ENCODE measurements at regions of chr17 and their contacts with region 1.

Region 1: GRCh38 chr17:46152423-46152822 is 40.8 kb downstream of the KANSL1 start:
- DNase-seq: no peak
- ATAC-seq: no peak
- H3K4me3 ChIP-seq: no peak overlapping the region
- H3K27ac ChIP-seq: no peak overlapping the region
- H3K4me1 ChIP-seq: peaks cover 0 to 1% of the 10 kb centered on the region in 2 experiments; a peak in 1 of 4 replicates
- H3K27me3 ChIP-seq: no peaks in the 10 kb centered on the region
- CTCF ChIP-seq: no peak
- POLR2A ChIP-seq: no peak
- RAD21 ChIP-seq: no peak

Region 2: DNA sequence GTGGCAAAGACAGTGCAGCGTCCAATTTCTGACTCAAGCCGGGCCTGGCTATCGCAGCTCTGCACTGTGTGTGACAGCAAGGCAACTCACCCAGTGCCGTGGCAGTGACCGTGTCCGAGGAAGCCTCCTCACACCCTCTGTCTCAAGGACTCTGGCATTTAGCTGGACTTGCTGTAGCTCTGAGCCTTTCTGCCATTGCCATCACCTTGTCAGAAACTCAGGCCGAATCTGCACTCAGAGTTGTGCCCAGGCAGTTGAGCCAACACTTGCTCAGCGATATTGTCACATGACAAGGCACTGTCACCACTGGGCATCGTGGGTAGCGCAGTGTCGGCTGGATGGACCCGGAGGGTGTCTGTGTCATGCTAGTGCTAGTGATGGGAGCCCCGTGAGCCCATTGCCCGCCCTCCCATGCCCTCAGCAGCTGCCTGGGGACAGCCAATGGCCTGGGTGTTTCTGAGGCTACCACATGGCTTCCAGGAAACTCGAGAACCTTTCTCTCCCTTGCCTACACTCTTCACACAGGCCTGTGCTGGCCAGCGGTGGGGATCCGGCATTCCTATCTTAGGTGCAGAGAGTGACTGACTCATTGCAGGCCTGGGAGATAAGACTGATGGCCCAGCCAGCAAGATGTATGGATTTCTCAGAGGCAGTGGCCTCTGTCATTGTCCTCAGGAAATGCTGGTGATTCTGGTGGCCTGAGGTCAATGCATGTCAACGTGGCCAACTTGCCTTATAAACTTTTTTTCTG is 175.5 kb before region 1 on chr17:
- CTCF ChIA-PET with region 1: no interaction called
- POLR2A ChIA-PET with region 1: no interaction called
- RAD21 ChIA-PET with region 1: no interaction called
- intact Hi-C with region 1: no loop called
- DNase-seq: no peak
- ATAC-seq: peak; percentile 29
- H3K4me3 ChIP-seq: no peak overlapping the region
- H3K27ac ChIP-seq: no peak overlapping the region
- H3K4me1 ChIP-seq: no peaks in the 10 kb centered on the region
- H3K27me3 ChIP-seq: no peaks in the 10 kb centered on the region
- CTCF ChIP-seq: no peak
- POLR2A ChIP-seq: no peak
- RAD21 ChIP-seq: no peak

Region 3: DNA sequence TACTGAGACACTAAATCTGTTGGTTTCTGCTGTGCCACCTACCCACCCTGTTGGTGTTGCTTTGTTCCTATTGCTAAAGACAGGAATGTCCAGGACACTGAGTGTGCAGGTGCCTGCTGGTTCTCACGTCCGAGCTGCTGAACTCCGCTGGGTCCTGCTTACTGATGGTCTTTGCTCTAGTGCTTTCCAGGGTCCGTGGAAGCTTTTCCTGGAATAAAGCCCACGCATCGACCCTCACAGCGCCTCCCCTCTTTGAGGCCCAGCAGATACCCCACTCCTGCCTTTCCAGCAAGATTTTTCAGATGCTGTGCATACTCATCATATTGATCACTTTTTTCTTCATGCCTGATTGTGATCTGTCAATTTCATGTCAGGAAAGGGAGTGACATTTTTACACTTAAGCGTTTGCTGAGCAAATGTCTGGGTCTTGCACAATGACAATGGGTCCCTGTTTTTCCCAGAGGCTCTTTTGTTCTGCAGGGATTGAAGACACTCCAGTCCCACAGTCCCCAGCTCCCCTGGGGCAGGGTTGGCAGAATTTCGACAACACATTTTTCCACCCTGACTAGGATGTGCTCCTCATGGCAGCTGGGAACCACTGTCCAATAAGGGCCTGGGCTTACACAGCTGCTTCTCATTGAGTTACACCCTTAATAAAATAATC is 138.8 kb before region 1 on chr17:
- CTCF ChIA-PET with region 1: no interaction called
- POLR2A ChIA-PET with region 1: no interaction called
- RAD21 ChIA-PET with region 1: no interaction called
- intact Hi-C with region 1: no loop called
- DNase-seq: no peak
- ATAC-seq: no peak
- H3K4me3 ChIP-seq: no peak overlapping the region
- H3K27ac ChIP-seq: no peak overlapping the region
- H3K4me1 ChIP-seq: no peaks in the 10 kb centered on the region
- H3K27me3 ChIP-seq: no peaks in the 10 kb centered on the region
- CTCF ChIP-seq: no peak
- POLR2A ChIP-seq: no peak
- RAD21 ChIP-seq: no peak

Region 4: GRCh38 chr17:46121841-46122485 is 30.5 kb before region 1 on chr17:
- CTCF ChIA-PET with region 1: no interaction called
- POLR2A ChIA-PET with region 1: no interaction called
- RAD21 ChIA-PET with region 1: no interaction called
- intact Hi-C with region 1: no loop called
- DNase-seq: no peak
- ATAC-seq: no peak
- H3K4me3 ChIP-seq: no peak overlapping the region
- H3K27ac ChIP-seq: no peak overlapping the region
- H3K4me1 ChIP-seq: no peaks in the 10 kb centered on the region
- H3K27me3 ChIP-seq: no peaks in the 10 kb centered on the region
- CTCF ChIP-seq: no peak
- POLR2A ChIP-seq: no peak
- RAD21 ChIP-seq: no peak

Region 5: DNA sequence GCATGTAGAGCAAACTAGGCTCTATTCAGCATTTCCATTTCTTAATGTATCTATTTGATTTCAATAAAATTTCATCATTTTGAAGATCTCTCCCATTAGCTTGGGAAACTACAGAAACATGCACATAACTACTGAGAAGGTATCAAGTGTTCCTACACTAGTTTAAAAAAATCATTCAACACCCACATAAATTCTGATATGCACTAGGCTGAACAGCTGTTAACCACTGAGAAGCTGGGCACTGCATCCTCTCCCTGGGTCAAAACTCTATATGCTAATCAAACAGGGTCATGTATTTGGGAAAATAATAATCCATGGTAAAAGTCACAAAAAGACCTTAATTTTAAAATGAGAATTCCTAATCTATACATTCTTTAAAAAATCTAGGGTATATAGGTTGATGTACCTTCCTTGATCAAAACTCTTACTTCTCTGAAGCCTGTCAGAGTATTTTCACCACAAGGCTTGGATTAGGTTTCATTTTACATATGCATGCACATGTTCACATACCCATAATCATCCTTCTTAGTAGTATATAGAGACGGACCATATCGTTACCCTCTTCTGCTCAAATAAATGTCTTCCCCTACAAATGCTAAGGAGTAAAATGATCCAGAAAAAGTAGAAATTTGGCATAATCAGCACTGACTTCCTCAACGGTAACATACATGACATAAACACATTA is 16.4 kb before region 1 on chr17:
- CTCF ChIA-PET with region 1: no interaction called
- POLR2A ChIA-PET with region 1: no interaction called
- RAD21 ChIA-PET with region 1: no interaction called
- intact Hi-C with region 1: loop called (anchors 1 kb)
- DNase-seq: no peak
- ATAC-seq: no peak
- H3K4me3 ChIP-seq: no peak overlapping the region
- H3K27ac ChIP-seq: no peak overlapping the region
- H3K4me1 ChIP-seq: peaks cover 4 to 6% of the 10 kb centered on the region in 2 experiments; a peak in 3 of 4 replicates
- H3K27me3 ChIP-seq: no peaks in the 10 kb centered on the region
- CTCF ChIP-seq: no peak
- POLR2A ChIP-seq: no peak
- RAD21 ChIP-seq: no peak

Region 6: DNA sequence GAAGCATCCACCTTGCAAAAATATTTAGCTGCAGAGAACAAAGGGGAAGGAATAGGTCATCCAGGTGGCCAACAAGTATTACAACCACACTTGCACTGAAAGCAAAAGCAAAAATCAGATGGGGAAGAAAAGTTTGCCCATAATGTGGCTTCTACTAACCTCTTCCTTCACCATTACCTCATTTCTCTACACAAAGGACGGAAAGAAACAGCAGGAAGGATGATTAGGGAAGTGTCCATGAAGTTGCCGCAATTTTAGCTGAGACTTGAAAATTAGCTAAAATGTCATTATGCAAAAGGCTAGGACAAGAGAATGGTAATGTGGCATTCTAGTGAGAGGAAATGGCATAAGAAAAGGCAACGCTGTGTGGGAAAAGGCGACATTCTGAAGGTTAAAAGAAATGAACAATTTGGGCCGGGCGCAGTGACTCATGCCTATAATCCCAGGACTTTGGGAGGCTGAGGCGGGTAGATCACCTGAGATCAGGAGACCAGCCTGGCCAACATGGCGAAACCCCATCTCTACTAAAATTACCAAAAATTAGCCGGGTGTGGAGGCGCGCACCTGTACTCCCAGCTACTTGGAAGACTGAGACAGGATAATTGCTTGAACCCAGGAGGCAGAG is 27.1 kb after region 1 on chr17:
- CTCF ChIA-PET with region 1: no interaction called
- POLR2A ChIA-PET with region 1: no interaction called
- RAD21 ChIA-PET with region 1: no interaction called
- intact Hi-C with region 1: no loop called
- DNase-seq: no peak
- ATAC-seq: no peak
- H3K4me3 ChIP-seq: no peak overlapping the region
- H3K27ac ChIP-seq: no peak overlapping the region
- H3K4me1 ChIP-seq: peaks cover 0 to 18% of the 10 kb centered on the region in 2 experiments; a peak in 2 of 4 replicates
- H3K27me3 ChIP-seq: no peaks in the 10 kb centered on the region
- CTCF ChIP-seq: no peak
- POLR2A ChIP-seq: no peak
- RAD21 ChIP-seq: no peak